CD8-positive, alpha-beta T cell (primary cell): ENCODE measurements at regions of chr9 and their contacts with region 1.

Region 1: DNA sequence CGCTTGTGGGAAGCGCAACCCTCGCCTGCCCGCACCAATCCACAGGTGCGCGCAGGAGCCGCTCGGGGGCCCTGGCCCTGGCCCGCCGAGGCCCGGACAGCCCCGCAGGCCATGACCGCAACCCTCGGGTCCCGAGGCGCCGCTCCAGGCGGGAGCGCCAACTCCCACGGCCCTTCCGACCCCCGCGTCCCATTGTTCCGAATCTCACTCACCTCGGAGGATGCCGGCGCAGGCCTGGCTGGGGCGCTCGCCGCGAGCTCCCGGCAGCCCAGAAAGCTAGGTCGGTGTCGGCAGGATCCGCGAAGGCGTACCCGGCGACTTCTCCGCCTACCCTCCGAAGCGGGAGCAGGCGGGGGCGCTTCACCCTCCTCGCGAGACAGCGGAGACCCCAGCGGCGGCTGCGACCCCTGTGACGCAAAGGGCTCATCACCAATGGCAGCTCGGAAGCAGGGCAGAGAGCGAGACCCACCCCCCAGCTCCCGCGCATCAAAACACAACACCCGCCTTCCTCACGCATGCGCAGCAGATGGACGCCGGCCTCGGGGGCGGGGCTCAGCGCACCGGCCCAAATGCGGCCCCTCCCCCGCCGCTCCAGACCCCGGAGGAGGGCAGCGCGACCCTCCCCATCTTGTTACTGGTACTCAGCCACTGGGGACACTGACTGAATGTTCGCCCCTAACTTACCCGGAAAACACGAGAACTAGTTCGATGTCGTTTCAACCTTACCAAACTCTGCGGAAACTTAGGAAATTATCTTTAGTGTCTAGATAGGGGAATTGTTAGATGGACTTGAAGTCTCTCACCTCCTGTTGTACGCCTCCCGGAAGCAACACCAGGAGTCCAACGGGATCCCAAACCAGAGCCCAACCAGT is 1.3 kb upstream of the SMIM27 start:
- DNase-seq: peak; percentile 90 to 99 (median 96)
- ATAC-seq: peak; percentile 85
- H3K4me3 ChIP-seq: peak overlapping the region; percentile 85 to 87
- H3K4me3 Mint-ChIP-seq: peak overlapping the region; percentile 94
- H3K27ac ChIP-seq: peak overlapping the region; percentile 91 to 97
- H3K27ac Mint-ChIP-seq: peak overlapping the region; percentile 99
- H3K4me1 ChIP-seq: peaks cover 23% of the 10 kb centered on the region
- H3K4me1 Mint-ChIP-seq: peaks cover 57% of the 10 kb centered on the region
- H3K27me3 ChIP-seq: no peaks in the 10 kb centered on the region
- H3K27me3 Mint-ChIP-seq: no peaks in the 10 kb centered on the region
- CTCF ChIP-seq: peak; percentile 19

Region 2: DNA sequence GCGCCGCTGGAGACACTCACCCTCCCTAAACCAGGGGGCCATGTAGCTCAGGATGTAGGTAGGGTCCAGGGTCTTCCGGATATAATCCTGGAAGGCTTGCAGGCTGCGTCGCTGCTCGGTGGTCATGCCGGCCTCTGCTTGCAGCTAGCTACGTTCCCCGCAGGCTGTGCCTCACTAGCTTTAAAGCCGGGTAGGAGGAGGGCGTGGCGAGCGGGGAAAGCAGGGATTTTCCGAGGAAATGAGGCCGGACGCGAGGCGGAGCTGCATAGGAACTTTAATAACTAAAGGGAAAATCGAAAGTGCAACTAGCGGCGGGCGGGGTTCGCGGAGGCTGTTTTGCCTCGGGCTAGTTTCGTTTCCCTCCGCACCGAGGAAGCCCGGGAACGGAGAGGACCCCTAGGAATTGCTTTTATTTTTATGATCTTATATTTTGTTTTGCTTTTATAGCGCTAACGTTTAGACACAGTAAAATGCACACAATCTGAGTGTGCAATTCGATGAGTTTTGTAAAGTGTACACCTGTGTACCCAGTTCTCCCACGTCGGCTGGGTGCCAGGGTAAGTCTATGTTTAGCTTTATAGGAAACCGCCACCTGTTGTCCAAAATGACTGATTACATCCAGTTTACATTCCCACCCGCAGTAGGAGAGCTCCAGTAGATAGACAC is 24.6 kb before region 1 on chr9 and contains the start of gene RIGI:
- CTCF ChIA-PET with region 1: interaction called, 15 read pairs
- POLR2A ChIA-PET with region 1: interaction called, 34 read pairs
- intact Hi-C with region 1: loop called (anchors 1 to 2 kb)
- DNase-seq: peak; percentile 47 to 94 (median 80)
- ATAC-seq: peak; percentile 79
- H3K4me3 ChIP-seq: peak within 1 kb of the TSS; percentile 79 to 85
- H3K4me3 Mint-ChIP-seq: peak within 1 kb of the TSS; percentile 98
- H3K27ac ChIP-seq: peak within 1 kb of the TSS; percentile 85 to 86
- H3K27ac Mint-ChIP-seq: peak within 1 kb of the TSS; percentile 98
- H3K4me1 ChIP-seq: peaks cover 22% of the 10 kb centered on the region
- H3K4me1 Mint-ChIP-seq: peaks cover 55% of the 10 kb centered on the region
- H3K27me3 ChIP-seq: no peaks in the 10 kb centered on the region
- H3K27me3 Mint-ChIP-seq: no peaks in the 10 kb centered on the region
- CTCF ChIP-seq: peak; percentile 60
- total RNA-seq, gene RIGI: 3.4 to 3.9 TPM

Region 3: GRCh38 chr9:33024966-33025571 is 474.3 kb after region 1 on chr9 and contains the start of gene DNAJA1:
- CTCF ChIA-PET with region 1: interaction called, 5 read pairs
- POLR2A ChIA-PET with region 1: interaction called, 3 read pairs
- intact Hi-C with region 1: loop called (anchors 1 to 2 kb)
- DNase-seq: peak; percentile 92 to 98 (median 96)
- ATAC-seq: peak; percentile 80
- H3K4me3 ChIP-seq: peak within 1 kb of the TSS; percentile 100
- H3K4me3 Mint-ChIP-seq: peak within 1 kb of the TSS; percentile 96
- H3K27ac ChIP-seq: peak within 1 kb of the TSS; percentile 100
- H3K27ac Mint-ChIP-seq: peak within 1 kb of the TSS; percentile 96
- H3K4me1 ChIP-seq: peaks cover 63% of the 10 kb centered on the region
- H3K4me1 Mint-ChIP-seq: peaks cover 70% of the 10 kb centered on the region
- H3K27me3 ChIP-seq: no peaks in the 10 kb centered on the region
- H3K27me3 Mint-ChIP-seq: no peaks in the 10 kb centered on the region
- CTCF ChIP-seq: no peak
- total RNA-seq, gene DNAJA1: 170 to 172 TPM